ENCODE measurements at regions of chr10 and their contacts with region 1.

Region 1: GRCh38 chr10:82778908-82779307 is 903.9 kb downstream of the NRG3 start:
- DNase-seq: no peak
- CTCF ChIP-seq: no peak

Region 2: DNA sequence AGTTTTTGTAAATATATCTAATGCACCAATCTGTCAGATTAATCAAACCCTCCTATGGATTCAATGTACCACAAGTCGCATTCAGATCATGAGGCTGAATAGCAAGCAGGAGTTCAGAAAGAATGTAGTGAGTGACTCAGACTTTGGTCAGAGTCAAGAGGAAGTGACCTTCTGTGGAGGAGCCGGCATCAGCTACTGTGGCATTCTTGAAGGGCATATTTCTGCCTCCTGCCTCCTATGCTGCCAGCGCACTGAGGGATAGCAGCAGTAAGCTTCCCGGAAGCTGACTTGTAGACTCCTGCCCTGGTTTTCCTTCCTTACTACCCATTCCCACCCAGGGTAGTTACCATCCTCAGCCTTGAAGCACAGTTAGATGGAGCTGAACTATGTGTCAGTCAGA is 36.4 kb before region 1 on chr10:
- CTCF ChIA-PET with region 1: no interaction called
- POLR2A ChIA-PET with region 1: no interaction called
- DNase-seq: no peak
- CTCF ChIP-seq: no peak

Region 3: GRCh38 chr10:82796510-82796909 is 17.6 kb after region 1 on chr10:
- CTCF ChIA-PET with region 1: interaction called, 18 read pairs
- POLR2A ChIA-PET with region 1: no interaction called
- DNase-seq: no peak
- CTCF ChIP-seq: no peak

Measured in GM10248 (cell line).